ENCODE measurements at regions of chr3 and their contacts with region 1.

Region 1: DNA sequence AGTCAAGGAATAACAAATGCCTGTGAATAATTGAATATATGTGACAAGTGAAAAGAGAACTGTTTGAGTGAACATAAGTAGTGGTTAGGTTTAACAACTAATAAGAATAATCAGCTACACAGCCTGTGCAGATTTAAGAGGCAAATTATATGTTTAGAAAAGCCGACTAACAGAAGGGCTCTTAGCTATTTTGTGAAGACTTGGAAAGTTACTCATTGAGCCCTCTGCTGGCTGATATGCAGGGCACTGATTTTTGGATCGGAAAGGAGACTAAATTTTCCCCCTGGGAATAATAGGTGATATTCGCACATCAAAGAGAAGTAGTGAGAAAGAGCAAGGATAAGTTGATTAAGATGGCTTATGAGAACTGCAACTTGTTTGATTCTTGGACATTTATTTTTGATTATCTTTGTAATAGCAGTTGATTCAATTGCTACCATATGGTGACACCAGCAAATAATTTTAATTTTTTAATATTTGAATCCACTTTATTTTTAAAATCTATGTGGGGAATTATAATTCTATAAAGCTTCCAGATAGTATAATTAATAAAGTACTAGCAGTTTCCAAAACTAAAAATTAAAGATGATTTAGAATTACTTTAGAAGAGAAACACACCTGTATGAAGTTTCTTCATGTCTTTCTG is 156.2 kb downstream of the NLGN1 start:
- DNase-seq: no peak

Region 2: GRCh38 chr3:173371848-173372487 is 181.8 kb before region 1 on chr3:
- intact Hi-C with region 1: loop called in 1 of 2 experiments (anchors 10 kb)
- DNase-seq: no peak

Region 3: GRCh38 chr3:173411375-173411973 is 142.3 kb before region 1 on chr3:
- intact Hi-C with region 1: loop called in 1 of 2 experiments (anchors 10 kb)
- DNase-seq: no peak

Region 4: DNA sequence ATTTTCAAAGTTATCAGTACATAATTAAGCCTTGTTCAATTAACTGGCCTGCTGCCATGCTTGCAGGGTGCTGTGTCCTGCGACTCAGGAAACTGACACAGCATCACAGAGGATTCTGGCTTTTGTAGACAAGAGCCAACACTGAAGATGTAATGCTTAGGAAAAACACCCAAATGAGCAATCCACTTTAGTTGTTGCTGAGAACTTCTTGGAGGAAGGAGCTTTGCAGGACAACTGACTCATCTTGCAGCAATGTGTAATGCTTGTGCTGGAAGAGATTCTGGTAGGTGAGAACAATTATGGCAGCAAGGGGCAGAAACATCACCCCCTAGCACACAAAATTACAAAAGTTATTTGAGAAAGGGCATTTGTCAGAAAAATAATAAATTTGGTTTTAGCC is 88.6 kb before region 1 on chr3:
- intact Hi-C with region 1: no loop called
- DNase-seq: no peak